Activated naive CD4-positive, alpha-beta T cell treated with anti-CD3 and anti-CD28 coated beads for 36 hours (primary cell): ENCODE measurements at regions of chr18 and their contacts with region 1.

Region 1: GRCh38 chr18:8045884-8046281 is 478.8 kb downstream of the PTPRM start:
- DNase-seq: peak; percentile 69
- H3K4me3 Mint-ChIP-seq: no peak overlapping the region
- H3K27ac Mint-ChIP-seq: no peak overlapping the region
- H3K4me1 Mint-ChIP-seq: peaks cover 9% of the 10 kb centered on the region
- H3K27me3 Mint-ChIP-seq: no peaks in the 10 kb centered on the region

Region 2: GRCh38 chr18:7575157-7576028 is 470.5 kb before region 1 on chr18:
- CTCF ChIA-PET with region 1: no interaction called
- intact Hi-C with region 1: loop called (anchors 10 kb)
- DNase-seq: no peak
- H3K4me3 Mint-ChIP-seq: no peak overlapping the region
- H3K27ac Mint-ChIP-seq: no peak overlapping the region
- H3K4me1 Mint-ChIP-seq: peaks cover 2% of the 10 kb centered on the region
- H3K27me3 Mint-ChIP-seq: peaks cover 26% of the 10 kb centered on the region

Region 3: DNA sequence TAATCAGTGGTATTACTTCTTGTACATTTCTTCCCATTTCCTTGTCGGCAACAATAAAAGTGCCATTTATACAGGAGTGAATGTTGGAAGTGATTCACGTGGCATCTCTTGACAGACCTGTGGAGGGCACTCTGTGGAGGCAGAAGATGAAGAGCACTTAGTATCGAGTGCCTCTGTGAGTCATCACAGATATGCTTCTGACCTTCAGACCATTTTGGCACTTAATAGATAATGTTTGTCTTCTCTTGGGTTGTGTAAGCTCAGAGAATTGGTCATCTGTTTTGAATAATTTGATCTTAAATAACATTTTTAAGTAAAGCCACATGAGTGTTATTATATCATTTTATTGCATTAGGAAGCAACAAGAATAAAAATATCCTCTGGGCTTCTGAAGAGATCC is 173.3 kb before region 1 on chr18:
- CTCF ChIA-PET with region 1: no interaction called
- intact Hi-C with region 1: loop called (anchors 10 kb)
- DNase-seq: no peak
- H3K4me3 Mint-ChIP-seq: no peak overlapping the region
- H3K27ac Mint-ChIP-seq: no peak overlapping the region
- H3K4me1 Mint-ChIP-seq: no peaks in the 10 kb centered on the region
- H3K27me3 Mint-ChIP-seq: no peaks in the 10 kb centered on the region

Region 4: DNA sequence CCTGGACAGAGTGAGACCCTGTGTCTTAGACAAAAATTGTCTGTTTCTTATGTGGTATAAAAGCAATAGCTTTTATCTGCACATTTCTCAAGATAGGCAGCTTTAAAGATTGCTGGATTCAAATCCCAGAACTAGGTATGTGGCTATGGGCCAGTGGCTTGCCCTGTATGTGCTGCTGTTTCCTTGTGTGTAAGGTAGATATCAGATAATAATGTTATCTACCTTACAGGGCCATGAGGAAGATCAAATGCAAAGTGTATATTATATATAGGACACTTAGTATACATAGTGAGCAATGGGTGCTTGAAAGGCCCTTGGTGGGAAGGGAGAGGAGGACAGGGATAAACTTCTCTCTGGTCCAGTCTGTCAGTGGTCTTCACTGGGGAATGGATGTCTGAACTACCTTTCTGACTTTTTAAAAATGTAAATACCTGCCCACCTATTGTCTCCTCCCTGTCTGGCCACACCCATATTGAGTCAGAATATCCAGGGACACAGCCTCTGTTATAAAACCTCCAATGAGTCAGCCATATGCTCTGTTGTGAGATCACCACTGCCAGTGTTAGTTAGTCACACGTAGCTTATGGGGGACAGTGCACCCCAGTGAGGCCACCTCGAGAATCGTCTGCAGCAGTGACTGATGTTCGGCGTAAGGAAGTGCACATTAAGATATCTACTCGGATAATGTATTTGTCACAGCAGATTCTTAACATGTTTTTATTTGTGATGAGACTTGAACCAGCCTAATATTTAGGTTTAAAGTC is 95.3 kb before region 1 on chr18:
- CTCF ChIA-PET with region 1: no interaction called
- intact Hi-C with region 1: loop called (anchors 1 kb)
- DNase-seq: peak; percentile 16
- H3K4me3 Mint-ChIP-seq: no peak overlapping the region
- H3K27ac Mint-ChIP-seq: no peak overlapping the region
- H3K4me1 Mint-ChIP-seq: peaks cover 15% of the 10 kb centered on the region
- H3K27me3 Mint-ChIP-seq: no peaks in the 10 kb centered on the region

Region 5: DNA sequence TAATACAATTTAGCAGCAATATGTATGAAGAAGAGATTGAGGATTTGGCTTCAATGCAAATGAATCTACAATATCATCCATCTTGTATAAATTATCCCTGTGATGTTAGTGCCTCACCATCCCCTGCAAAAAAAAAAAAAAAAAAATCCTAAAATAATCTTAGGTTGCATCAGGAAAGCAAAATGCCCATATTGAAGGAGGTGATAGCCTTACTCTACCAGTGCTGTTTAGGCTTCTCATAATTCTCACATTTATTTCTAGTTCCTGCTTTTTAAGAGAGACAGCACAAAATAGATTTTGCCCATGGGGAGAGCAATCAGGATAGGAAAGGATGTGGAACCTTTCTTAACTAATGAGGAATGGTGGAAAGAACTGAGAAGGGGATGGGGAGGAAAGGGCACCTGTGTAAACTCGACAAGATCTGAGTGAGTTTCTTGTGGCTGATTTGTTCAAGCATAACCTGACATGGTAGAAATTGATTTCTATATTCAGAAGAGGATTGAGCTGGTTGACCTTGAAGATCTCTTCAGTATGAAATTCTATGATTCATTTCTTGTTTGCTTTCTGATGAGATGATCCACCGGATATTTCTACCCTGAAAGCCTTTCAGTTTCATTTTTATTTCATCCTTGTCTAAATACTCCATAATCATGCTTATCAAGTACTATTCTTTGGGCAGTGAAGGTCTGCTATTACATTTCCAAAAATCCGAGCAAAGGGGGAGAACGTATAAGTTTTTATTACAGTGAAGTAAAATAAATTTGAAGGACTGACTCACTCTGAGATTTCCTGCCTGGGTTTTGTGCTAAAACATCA is 87.6 kb before region 1 on chr18:
- CTCF ChIA-PET with region 1: no interaction called
- intact Hi-C with region 1: loop called (anchors 1 kb)
- DNase-seq: no peak
- H3K4me3 Mint-ChIP-seq: no peak overlapping the region
- H3K27ac Mint-ChIP-seq: peak overlapping the region; percentile 44
- H3K4me1 Mint-ChIP-seq: peaks cover 19% of the 10 kb centered on the region
- H3K27me3 Mint-ChIP-seq: no peaks in the 10 kb centered on the region